ENCODE measurements at regions of chr16 and their contacts with region 1.

Region 1: GRCh38 chr16:81861503-81861902 is 82.4 kb downstream of the PLCG2 start:
- H3K4me3 ChIP-seq: no peak overlapping the region
- H3K27ac ChIP-seq: no peak overlapping the region
- H3K4me1 ChIP-seq: no peaks in the 10 kb centered on the region
- CTCF ChIP-seq: no peak

Region 2: GRCh38 chr16:81873843-81874752 is 12.6 kb after region 1 on chr16:
- CTCF ChIA-PET with region 1: interaction called, 10 read pairs
- POLR2A ChIA-PET with region 1: no interaction called
- H3K4me3 ChIP-seq: no peak overlapping the region
- H3K27ac ChIP-seq: no peak overlapping the region
- H3K4me1 ChIP-seq: no peaks in the 10 kb centered on the region
- CTCF ChIP-seq: peak; percentile 44; the same call in 1 of the 2 replicates

Region 3: GRCh38 chr16:81921085-81921814 is 59.7 kb after region 1 on chr16:
- CTCF ChIA-PET with region 1: no interaction called
- POLR2A ChIA-PET with region 1: no interaction called
- H3K4me3 ChIP-seq: no peak overlapping the region
- H3K27ac ChIP-seq: no peak overlapping the region
- H3K4me1 ChIP-seq: no peaks in the 10 kb centered on the region
- CTCF ChIP-seq: no peak

Measured in HEK293 (cell line).